GM13976 (cell line): ENCODE measurements at regions of chr5 and their contacts with region 1.

Region 1: DNA sequence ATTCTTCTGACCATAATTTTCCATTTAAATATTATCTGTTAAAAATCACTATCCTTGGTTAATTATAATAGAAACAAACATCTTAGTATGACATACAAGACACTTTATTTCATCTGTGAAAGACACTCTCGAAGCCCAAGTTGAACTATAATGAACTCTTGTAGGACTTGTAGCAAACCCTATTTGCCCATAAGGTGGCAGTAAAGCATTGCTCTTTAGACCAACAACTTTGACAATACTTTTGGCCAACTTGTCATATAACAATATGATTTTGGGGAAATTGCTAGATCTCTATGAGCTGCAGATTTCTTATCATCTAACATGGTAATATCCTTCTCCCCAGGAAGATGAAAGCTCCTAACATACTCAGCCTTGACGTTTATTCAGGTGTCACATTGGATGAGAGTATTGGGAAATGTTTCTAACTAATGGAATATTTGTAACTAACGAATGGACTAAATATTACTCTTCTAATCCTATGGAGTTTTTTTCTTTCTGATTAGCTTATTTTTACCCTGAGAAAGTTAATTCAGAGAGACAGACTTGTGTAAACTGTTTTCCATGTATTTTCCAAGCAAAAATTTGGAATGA is 11.0 kb downstream of the SPINK14 start:
- DNase-seq: no peak
- CTCF ChIP-seq: peak; percentile 59

Region 2: GRCh38 chr5:147346006-147346561 is 833.2 kb before region 1 on chr5:
- in situ Hi-C with region 1: no loop called
- DNase-seq: no peak
- CTCF ChIP-seq: no peak

Region 3: DNA sequence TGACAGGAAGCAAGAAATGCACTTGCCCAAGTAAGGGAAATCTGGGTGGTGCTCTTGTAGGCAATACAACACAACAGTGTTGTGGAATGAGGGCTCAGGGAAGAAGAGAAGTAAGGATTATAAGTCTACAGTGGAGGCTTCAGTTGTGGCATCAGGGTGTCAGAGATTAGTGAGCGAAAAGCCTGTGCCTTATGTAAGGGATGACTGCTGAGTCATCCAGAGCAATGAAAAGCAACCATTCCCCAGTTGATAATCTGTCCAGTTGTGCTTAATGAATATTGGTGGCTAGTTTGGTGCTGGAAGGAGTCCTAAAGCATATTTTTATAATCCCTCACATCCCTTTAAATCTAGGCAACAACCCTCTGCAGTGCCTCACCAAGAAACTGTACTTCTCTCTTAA is 246.5 kb after region 1 on chr5:
- in situ Hi-C with region 1: no loop called
- DNase-seq: no peak
- CTCF ChIP-seq: no peak

Region 4: GRCh38 chr5:148457183-148457620 is 277.9 kb after region 1 on chr5:
- in situ Hi-C with region 1: loop called (anchors 25 kb)
- DNase-seq: no peak
- CTCF ChIP-seq: no peak

Region 5: DNA sequence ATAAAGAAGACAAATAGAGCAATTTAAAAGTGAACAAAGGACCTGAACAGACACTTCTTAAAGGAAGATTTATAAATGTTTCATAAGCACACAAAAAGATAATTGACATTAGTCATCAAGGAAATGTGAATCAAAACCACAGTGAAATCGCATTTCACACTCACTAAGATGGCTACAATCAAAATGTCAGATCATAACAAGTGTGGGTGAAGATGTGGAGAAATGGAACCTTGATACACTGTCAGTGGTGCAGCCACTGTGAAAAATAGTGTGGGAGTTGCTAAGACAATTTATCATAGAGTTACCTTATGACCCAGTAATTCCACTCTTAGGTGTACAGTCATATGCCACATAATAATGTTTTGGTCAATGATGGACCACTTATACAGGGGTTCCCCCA is 529.5 kb after region 1 on chr5:
- in situ Hi-C with region 1: loop called (anchors 25 kb)
- DNase-seq: no peak
- CTCF ChIP-seq: no peak

Region 6: GRCh38 chr5:149018909-149019443 is 839.6 kb after region 1 on chr5:
- in situ Hi-C with region 1: no loop called
- DNase-seq: no peak
- CTCF ChIP-seq: no peak

Region 7: GRCh38 chr5:149035372-149035790 is 856.1 kb after region 1 on chr5:
- in situ Hi-C with region 1: loop called (anchors 25 kb)
- DNase-seq: peak; percentile 54
- CTCF ChIP-seq: peak; percentile 81

Region 8: DNA sequence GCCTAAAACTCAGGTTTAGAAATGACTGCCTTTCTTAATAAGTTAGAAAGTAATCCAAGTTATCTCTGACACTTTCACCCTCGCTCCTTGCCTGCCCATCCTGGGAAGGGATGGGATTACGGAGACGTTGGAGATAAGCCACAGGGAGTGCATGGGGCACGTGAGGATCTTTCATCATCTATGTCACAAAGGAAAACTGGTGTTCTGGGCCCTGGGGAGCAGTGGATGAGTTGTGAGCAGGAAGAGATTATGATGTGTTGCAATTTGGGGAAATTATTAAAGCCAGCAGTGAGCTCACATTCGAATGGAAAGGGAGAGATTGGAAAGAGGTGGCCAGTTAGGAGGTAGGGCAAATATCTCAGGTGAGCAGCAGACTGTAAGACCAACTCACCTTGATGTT is 1105.2 kb after region 1 on chr5:
- in situ Hi-C with region 1: no loop called
- DNase-seq: no peak
- CTCF ChIP-seq: no peak